ENCODE measurements at regions of chr7 and their contacts with region 1.

Region 1: DNA sequence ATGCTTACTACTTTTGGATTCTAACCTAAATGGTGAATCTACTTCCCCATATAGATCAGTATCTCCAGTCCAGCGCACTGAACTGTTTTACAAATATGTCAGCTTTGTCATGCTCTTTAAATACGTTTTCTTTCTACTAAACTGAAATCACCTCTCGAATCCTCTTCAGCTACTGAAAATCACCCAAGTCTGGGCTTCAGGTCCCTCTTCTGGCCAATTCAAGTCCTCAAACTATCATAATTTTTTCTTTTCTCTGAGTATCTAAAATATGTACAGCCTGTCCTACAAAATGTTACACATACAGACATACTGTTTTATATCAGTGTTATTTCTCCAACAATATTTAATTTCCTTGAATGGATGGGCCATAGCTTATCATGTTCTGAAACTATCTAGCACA is 84.2 kb downstream of the CACNA2D1 start:
- DNase-seq: no peak
- ATAC-seq: no peak
- H3K4me3 ChIP-seq: no peak overlapping the region
- H3K27ac ChIP-seq: peak overlapping the region in 1 of 12 donors; percentile 10
- H3K4me1 ChIP-seq: peaks cover 0 to 53% (median 17%) of the 10 kb centered on the region in 12 donors
- H3K27me3 ChIP-seq: no peaks in the 10 kb centered on the region
- CTCF ChIP-seq: peak in 4 of 12 donors; percentile 15 to 30 (median 27)
- POLR2A ChIP-seq: no peak

Region 2: GRCh38 chr7:82234457-82235049 is 124.9 kb before region 1 on chr7:
- intact Hi-C with region 1: loop called in 1 of 10 experiments (anchors 10 kb)
- DNase-seq: no peak
- ATAC-seq: peak in 1 of 4 donors; percentile 55
- H3K4me3 ChIP-seq: no peak overlapping the region
- H3K27ac ChIP-seq: no peak overlapping the region
- H3K4me1 ChIP-seq: peaks cover 0 to 23% (median 6%) of the 10 kb centered on the region in 12 donors
- H3K27me3 ChIP-seq: no peaks in the 10 kb centered on the region
- CTCF ChIP-seq: peak; percentile 37 to 74 (median 60)
- POLR2A ChIP-seq: no peak

Region 3: GRCh38 chr7:82319674-82320118 is 39.7 kb before region 1 on chr7:
- intact Hi-C with region 1: loop called in 1 of 10 experiments (anchors 5 kb)
- DNase-seq: peak; percentile 83 to 94 (median 86)
- ATAC-seq: peak; percentile 90 to 97 (median 95)
- H3K4me3 ChIP-seq: no peak overlapping the region
- H3K27ac ChIP-seq: peak overlapping the region in 11 of 12 donors; percentile 36 to 69 (median 62)
- H3K4me1 ChIP-seq: peaks cover 0 to 52% (median 23%) of the 10 kb centered on the region in 12 donors
- H3K27me3 ChIP-seq: no peaks in the 10 kb centered on the region
- CTCF ChIP-seq: no peak
- POLR2A ChIP-seq: no peak